Heart right ventricle (tissue), 16 donors: ENCODE measurements at regions of chr2 and their contacts with region 1.

Region 1: DNA sequence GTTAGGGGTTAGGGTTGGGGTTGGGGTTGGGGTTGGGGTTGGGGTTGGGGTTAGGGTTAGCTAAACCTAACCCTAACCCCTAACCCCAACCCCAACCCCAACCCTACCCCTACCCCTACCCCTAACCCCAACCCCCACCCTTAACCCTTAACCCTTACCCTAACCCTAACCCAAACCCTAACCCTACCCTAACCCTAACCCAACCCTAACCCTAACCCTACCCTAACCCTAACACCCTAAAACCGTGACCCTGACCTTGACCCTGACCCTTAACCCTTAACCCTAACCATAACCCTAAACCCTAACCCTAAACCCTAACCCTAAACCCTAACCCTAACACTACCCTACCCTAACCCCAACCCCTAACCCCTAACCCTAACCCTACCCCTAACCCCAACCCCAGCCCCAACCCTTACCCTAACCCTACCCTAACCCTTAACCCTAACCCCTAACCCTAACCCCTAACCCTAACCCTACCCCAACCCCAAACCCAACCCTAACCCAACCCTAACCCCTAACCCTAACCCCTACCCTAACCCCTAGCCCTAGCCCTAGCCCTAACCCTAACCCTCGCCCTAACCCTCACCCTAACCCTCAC is 24.1 kb upstream of the RABL2A start:
- DNase-seq: no peak
- ATAC-seq: peak; percentile 61 to 89 (median 83)
- H3K4me3 ChIP-seq: peak overlapping the region in 9 of 10 donors; percentile 21 to 72 (median 61)
- H3K27ac ChIP-seq: peak overlapping the region in 9 of 10 donors; percentile 58 to 96 (median 74)
- H3K4me1 ChIP-seq: peaks cover 0 to 11% (median 3%) of the 10 kb centered on the region in 9 donors
- H3K27me3 ChIP-seq: no peaks in the 10 kb centered on the region
- CTCF ChIP-seq: no peak

Region 2: DNA sequence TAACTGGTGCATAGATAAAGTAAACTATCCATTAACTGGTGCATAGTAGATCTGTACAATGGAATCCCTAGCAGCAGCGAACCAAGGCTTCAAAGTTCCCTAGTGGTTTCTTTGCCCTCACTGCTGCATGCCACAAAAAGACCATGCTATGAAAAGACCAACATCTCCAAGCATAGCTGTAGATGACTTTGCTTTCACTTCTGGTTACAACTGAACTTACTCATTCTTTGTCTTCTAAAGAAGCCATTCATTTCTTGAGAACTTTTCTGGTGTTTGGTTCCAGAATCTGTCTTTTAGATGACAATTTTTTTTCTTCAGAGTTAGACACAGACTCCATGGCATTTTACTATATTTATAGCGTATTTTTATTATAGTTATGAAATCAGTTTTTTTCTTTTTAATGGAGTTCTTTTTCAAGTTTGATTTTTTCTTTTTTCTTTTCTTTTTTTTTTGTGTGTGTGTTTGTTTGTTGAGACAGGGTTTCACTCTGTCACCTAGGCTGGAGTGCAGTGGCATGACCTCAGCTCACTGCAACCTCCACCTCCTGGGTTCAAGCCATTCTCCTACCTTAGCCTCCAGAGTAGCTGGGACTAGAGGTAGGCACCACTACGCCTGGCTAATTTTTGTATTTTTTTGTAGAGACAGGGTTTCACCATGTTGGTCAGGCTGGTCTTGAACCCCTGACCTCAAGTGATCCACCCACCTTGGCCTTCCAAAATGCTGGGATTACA is 89.9 kb after region 1 on chr2:
- intact Hi-C with region 1: loop called in 2 of 10 experiments (anchors 10 kb)
- DNase-seq: no peak
- ATAC-seq: peak in 2 of 8 donors; percentile 7 to 10
- H3K4me3 ChIP-seq: no peak overlapping the region
- H3K27ac ChIP-seq: peak overlapping the region in 2 of 10 donors; percentile 47 to 52
- H3K4me1 ChIP-seq: peaks cover 0 to 24% (median 2%) of the 10 kb centered on the region in 9 donors
- H3K27me3 ChIP-seq: no peaks in the 10 kb centered on the region
- CTCF ChIP-seq: no peak

Region 3: GRCh38 chr2:113700186-113700841 is 97.3 kb after region 1 on chr2:
- intact Hi-C with region 1: loop called in 3 of 10 experiments (anchors 5 to 10 kb)
- DNase-seq: peak; percentile 29 to 42
- ATAC-seq: peak; percentile 65 to 93 (median 84)
- H3K4me3 ChIP-seq: peak overlapping the region in 4 of 10 donors; percentile 2 to 28 (median 16)
- H3K27ac ChIP-seq: no peak overlapping the region
- H3K4me1 ChIP-seq: peaks cover 0 to 9% (median 3%) of the 10 kb centered on the region in 9 donors
- H3K27me3 ChIP-seq: no peaks in the 10 kb centered on the region
- CTCF ChIP-seq: peak in 7 of 9 donors; percentile 10 to 62 (median 55)

Region 4: DNA sequence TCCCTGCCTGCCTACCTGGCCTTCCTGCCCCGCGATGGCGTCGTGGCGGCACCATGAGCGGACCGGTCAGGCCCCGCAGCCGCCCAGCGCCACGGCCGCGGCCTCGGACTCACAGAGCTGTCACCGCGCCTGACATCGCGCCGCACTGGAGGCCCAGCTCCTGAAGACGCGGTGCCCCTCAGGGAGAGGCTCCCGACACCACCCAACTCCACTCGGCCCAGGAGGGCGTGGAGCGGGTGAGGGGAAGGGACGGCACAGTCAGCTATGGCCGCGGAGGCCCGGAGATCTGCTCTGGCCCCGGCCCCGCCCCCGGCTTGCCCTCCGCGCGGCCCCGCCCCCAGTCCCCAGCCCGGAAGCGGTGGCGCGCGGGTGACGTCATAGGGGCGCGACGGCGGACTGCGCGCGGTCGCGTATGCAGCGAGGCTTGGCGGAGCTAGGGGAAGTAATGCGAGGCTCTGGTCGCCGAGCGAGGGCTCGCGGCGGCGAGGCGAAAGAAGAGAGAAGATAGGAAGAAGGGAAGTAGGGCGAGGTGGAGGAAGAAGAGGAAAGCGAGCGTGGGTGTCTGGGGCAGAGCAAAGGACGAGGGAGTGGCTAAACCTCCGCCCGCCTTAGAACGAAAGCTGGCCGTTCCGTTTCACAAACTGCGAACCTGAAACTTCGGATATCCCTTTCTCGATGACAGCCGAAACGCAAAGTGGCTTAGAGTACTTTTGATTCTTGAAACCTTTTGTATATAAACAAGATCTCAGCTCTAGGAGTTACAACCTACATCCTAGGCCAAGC is 153.6 kb after region 1 on chr2 and contains the start of gene SLC35F5:
- intact Hi-C with region 1: no loop called
- DNase-seq: peak; percentile 91 to 95
- ATAC-seq: peak; percentile 97 to 99 (median 98)
- H3K4me3 ChIP-seq: peak within 1 kb of the TSS; percentile 65 to 96 (median 84)
- H3K27ac ChIP-seq: peak within 1 kb of the TSS; percentile 86 to 97 (median 93)
- H3K4me1 ChIP-seq: peaks cover 0 to 48% (median 24%) of the 10 kb centered on the region in 9 donors
- H3K27me3 ChIP-seq: no peaks in the 10 kb centered on the region
- CTCF ChIP-seq: no peak
- total RNA-seq, gene SLC35F5: 52.9 to 67.1 (median 59.2) TPM

Region 5: GRCh38 chr2:113831161-113831560 is 228.2 kb after region 1 on chr2:
- intact Hi-C with region 1: no loop called
- DNase-seq: no peak
- ATAC-seq: no peak
- H3K4me3 ChIP-seq: no peak overlapping the region
- H3K27ac ChIP-seq: no peak overlapping the region
- H3K4me1 ChIP-seq: peaks cover 0 to 5% (median 0%) of the 10 kb centered on the region in 9 donors
- H3K27me3 ChIP-seq: no peaks in the 10 kb centered on the region
- CTCF ChIP-seq: no peak